Prostate gland (tissue), 2 donors: ENCODE measurements at regions of chr7 and their contacts with region 1.

Region 1: DNA sequence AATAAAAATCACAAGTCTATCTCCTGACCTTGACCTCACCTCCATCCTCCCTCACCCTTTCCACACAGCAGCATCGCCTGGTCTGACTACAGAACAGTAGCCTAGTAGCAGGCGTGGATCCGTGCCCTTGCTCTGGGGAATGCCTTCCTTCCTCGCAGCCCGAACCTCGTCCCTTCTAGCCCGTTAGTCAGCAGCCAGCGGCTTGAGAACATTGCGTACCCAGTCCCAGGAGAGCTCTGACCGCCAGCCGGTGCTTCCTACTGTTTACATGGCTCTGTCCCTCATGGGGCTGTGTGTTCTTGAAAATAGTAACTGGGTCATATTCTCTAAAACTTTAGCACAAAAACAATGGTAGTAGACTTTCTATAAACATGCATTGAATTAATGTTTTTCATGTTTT is 682.7 kb upstream of the IGFBP3 start:
- DNase-seq: peak; percentile 53
- H3K4me3 ChIP-seq: no peak overlapping the region
- H3K27ac ChIP-seq: peak overlapping the region; percentile 28 to 33
- H3K4me1 ChIP-seq: no peaks in the 10 kb centered on the region
- H3K27me3 ChIP-seq: no peaks in the 10 kb centered on the region
- CTCF ChIP-seq: no peak
- POLR2A ChIP-seq: no peak

Region 2: DNA sequence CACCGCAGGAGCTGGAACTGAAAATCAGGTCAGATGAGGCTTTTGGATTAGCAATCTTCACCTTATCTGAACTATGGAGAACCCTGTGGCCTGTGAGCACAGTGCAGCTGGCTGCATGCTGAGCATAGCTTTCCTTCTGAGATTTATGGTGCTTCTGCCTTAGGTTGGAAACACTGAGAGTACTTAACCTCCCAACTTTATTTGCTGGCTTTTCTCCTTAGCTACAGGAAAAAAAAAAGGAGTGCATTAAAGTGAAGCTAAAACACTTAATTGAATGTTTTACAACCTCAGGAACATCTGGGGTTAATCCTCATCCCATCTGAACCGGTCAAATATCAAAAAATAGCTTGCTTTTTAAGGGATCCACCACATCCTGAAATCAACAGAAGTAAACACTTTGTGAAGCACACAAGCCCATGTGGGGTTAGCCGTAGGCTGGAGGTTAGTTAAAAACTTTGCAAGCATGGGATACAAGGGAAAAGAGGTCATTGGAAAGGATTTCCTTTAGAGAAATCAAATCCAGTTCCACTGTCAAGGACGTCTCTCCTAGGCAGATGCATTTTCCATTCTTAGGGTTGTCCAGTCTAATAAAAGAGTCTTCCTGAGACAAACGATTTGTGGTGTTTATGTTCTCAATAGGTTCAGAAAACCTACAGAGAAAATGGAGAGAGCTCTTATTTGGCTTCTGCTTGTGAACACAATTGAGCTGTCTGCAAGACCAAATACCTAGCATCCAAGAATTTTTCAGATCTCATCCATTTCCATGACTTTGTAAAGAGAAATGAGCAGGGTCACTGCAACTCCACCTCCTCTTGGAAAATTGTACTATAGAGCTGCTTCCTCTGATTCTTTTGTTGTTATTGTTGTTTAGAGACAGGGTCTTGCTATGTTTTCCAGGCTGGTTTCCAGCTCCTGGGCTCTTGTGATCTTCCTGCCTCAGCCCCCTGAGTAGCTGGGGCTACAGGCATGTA is 212.3 kb before region 1 on chr7:
- intact Hi-C with region 1: loop called (anchors 5 kb)
- DNase-seq: no peak
- H3K4me3 ChIP-seq: no peak overlapping the region
- H3K27ac ChIP-seq: no peak overlapping the region
- H3K4me1 ChIP-seq: no peaks in the 10 kb centered on the region
- H3K27me3 ChIP-seq: no peaks in the 10 kb centered on the region
- CTCF ChIP-seq: no peak
- POLR2A ChIP-seq: no peak

Region 3: DNA sequence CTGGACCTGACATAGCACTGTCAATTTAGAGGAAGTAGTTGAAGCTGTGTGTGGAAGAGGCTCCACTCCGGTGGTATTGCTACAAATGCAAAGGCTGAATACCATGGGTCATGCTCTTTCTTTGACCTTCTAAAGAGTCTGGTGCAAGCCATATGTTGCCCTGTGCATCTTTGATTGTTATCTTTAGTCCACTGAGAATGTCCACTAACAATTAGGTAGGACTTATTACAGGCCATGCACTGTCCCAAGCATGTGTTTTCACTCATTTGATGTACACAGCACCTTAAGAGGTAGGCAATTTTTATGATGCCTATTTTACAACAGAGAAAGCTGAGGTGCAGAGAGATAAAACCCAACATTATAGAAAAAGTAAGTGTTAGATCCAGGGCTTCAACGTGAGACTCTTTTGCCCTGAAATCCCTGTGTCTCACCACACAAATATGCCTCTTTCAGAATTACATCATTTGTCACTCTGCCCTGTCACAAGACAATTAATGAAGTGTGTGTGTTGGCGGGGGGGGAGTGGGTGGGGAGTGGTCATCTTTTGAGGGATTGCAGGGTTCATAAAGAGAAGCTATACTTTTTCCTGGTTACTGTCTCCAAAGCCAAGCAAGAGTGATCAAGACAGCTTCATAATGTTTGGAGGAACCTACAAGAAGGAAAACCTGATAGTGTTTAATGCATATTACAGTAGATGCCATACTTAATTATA is 45.1 kb before region 1 on chr7:
- intact Hi-C with region 1: loop called (anchors 2 kb)
- DNase-seq: no peak
- H3K4me3 ChIP-seq: no peak overlapping the region
- H3K27ac ChIP-seq: no peak overlapping the region
- H3K4me1 ChIP-seq: no peaks in the 10 kb centered on the region
- H3K27me3 ChIP-seq: no peaks in the 10 kb centered on the region
- CTCF ChIP-seq: no peak
- POLR2A ChIP-seq: no peak

Region 4: DNA sequence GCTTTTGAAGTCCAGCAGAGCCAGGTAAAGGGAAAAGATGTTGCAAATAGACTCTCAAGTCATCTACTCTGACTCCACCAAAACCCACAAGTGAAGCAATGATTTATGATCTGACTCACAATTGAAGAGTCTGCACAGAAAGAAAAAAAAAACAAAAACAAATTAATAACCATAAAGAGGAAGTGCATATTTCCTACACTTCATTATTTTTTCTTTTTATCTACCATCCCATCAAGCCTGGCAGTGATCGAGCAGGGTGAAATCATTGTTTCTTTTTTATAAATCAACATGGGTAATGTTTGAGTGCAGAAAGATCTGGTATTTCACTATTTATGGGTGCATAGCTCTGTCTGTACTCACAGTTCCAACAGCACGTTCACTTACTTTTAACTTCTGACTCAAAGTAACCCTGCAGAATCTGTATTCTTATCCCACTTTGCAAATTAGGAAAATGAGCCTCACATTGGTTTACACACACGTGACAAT is 149.1 kb after region 1 on chr7:
- intact Hi-C with region 1: loop called (anchors 5 kb)
- DNase-seq: no peak
- H3K4me3 ChIP-seq: no peak overlapping the region
- H3K27ac ChIP-seq: no peak overlapping the region
- H3K4me1 ChIP-seq: no peaks in the 10 kb centered on the region
- H3K27me3 ChIP-seq: no peaks in the 10 kb centered on the region
- CTCF ChIP-seq: no peak
- POLR2A ChIP-seq: no peak